ENCODE measurements at regions of chr12 and their contacts with region 1.

Region 1: GRCh38 chr12:100266835-100267618 is at the starts of genes DEPDC4 and SCYL2:
- DNase-seq: peak; percentile 97
- ATAC-seq: peak; percentile 96
- H3K4me3 Mint-ChIP-seq: peak within 1 kb of the TSS; percentile 86
- H3K27ac Mint-ChIP-seq: peak within 1 kb of the TSS; percentile 98
- H3K4me1 Mint-ChIP-seq: peaks cover 25% of the 10 kb centered on the region
- H3K27me3 Mint-ChIP-seq: no peaks in the 10 kb centered on the region
- CTCF ChIP-seq: no peak
- total RNA-seq, gene DEPDC4: 1.6 to 3.7 TPM
- total RNA-seq, gene SCYL2: 21.9 to 25.4 TPM

Region 2: GRCh38 chr12:100200463-100201181 is 66.4 kb before region 1 on chr12 and contains the start of gene ACTR6:
- CTCF ChIA-PET with region 1: interaction called, 6 read pairs
- POLR2A ChIA-PET with region 1: interaction called, 8 read pairs
- intact Hi-C with region 1: loop called (anchors 5 kb)
- DNase-seq: peak; percentile 99
- ATAC-seq: peak; percentile 84
- H3K4me3 Mint-ChIP-seq: peak within 1 kb of the TSS; percentile 99
- H3K27ac Mint-ChIP-seq: peak within 1 kb of the TSS; percentile 100
- H3K4me1 Mint-ChIP-seq: peaks cover 17% of the 10 kb centered on the region
- H3K27me3 Mint-ChIP-seq: no peaks in the 10 kb centered on the region
- CTCF ChIP-seq: no peak
- total RNA-seq, gene ACTR6: 26.3 to 30.9 TPM